HCT116 (cell line): ENCODE measurements at regions of chr3 and their contacts with region 1.

Region 1: DNA sequence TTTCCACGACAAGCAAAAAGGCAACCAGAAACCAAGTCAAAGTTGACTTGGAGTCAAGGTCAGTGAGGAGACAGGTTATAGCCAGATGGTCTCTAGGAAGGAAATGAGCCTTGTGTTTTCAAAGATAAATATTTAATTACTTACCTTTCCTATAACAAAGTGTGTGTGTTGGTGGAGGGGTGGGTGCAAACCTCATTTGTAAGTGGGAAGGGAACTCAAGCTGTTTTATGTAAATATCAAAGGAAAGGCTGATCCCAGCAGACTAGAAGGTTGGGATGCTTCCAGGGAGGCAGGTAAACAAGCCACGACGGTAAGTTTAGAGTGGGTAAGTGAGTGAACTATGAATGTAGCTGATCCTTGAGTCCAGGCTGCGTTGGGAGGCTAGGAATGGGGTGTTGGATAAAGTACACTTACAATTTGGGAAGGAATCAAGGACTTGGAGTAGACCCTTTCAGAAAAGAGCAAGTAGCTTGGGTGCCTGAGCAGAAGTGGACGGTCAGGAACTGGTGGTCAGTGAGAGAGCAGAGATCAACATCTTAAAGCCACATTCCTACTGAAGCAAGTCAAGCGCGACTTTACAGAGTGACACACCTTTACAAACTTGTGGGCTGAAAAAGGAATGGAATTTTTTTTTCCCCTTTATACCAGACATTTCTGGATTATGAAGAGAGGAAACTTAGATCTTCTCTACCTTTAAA is 82.0 kb upstream of the TBL1XR1 start:
- DNase-seq: no peak
- ATAC-seq: no peak
- H3K4me3 ChIP-seq: no peak overlapping the region
- H3K27ac ChIP-seq: no peak overlapping the region
- H3K4me1 ChIP-seq: peaks cover 11 to 14% of the 10 kb centered on the region in 2 experiments
- H3K27me3 ChIP-seq: no peaks in the 10 kb centered on the region
- CTCF ChIP-seq: no peak
- POLR2A ChIP-seq: no peak
- RAD21 ChIP-seq: no peak

Region 2: GRCh38 chr3:177251755-177252154 is 27.5 kb before region 1 on chr3:
- CTCF ChIA-PET with region 1: no interaction called
- POLR2A ChIA-PET with region 1: no interaction called
- RAD21 ChIA-PET with region 1: no interaction called
- intact Hi-C with region 1: loop called (anchors 1 kb)
- DNase-seq: no peak
- ATAC-seq: no peak
- H3K4me3 ChIP-seq: no peak overlapping the region
- H3K27ac ChIP-seq: no peak overlapping the region
- H3K4me1 ChIP-seq: no peaks in the 10 kb centered on the region
- H3K27me3 ChIP-seq: no peaks in the 10 kb centered on the region
- CTCF ChIP-seq: no peak
- POLR2A ChIP-seq: no peak
- RAD21 ChIP-seq: no peak